Lower leg skin (tissue), 4 donors: ENCODE measurements at regions of chr4 and their contacts with region 1.

Region 1: GRCh38 chr4:76430519-76431388 is 4.3 kb upstream of the SHROOM3 start:
- DNase-seq: no peak
- H3K4me3 ChIP-seq: no peak overlapping the region
- CTCF ChIP-seq: no peak
- POLR2A ChIP-seq: no peak

Region 2: DNA sequence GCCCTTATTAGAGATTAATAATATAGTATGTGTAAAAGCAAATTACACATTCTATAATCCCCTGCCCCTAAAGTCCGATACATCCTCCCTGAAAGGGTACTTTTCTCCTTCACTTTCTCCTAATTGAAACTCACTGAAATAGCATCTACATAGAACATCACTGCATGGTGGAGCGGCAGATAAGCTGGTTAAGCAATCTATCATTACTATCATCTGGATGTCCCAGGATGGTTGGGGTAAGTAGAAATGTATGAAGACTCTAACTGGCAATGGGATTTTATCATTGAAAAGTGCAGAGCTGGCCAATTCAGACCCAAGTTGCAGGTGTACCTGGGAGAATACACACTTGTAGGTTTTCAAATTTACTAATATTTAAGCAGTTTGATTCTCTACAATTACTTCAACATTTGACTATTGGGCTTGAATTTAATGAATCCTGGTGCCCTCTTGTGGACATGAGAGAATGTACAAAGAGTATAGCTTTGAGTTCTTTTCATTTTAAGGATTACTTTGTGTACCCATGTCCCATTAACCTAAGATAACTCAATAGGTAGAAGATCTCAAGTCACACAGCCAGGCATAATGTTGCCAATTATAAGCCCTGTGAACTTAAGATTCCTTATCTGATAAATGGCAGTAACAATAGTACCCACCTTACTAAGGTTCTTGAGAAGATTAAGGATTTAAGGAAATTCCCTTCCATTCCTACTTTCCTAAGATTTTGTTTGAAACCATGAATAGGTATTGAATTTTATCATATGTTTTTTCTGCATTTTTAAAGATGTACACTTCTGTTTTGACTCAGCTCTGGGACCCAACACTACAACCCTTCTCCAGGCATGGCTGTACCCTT is 74.1 kb after region 1 on chr4:
- intact Hi-C with region 1: loop called (anchors 10 kb)
- DNase-seq: no peak
- H3K4me3 ChIP-seq: no peak overlapping the region
- CTCF ChIP-seq: peak in 1 of 3 donors; percentile 45
- POLR2A ChIP-seq: no peak